ENCODE measurements at regions of chr12 and their contacts with region 1.

Region 1: DNA sequence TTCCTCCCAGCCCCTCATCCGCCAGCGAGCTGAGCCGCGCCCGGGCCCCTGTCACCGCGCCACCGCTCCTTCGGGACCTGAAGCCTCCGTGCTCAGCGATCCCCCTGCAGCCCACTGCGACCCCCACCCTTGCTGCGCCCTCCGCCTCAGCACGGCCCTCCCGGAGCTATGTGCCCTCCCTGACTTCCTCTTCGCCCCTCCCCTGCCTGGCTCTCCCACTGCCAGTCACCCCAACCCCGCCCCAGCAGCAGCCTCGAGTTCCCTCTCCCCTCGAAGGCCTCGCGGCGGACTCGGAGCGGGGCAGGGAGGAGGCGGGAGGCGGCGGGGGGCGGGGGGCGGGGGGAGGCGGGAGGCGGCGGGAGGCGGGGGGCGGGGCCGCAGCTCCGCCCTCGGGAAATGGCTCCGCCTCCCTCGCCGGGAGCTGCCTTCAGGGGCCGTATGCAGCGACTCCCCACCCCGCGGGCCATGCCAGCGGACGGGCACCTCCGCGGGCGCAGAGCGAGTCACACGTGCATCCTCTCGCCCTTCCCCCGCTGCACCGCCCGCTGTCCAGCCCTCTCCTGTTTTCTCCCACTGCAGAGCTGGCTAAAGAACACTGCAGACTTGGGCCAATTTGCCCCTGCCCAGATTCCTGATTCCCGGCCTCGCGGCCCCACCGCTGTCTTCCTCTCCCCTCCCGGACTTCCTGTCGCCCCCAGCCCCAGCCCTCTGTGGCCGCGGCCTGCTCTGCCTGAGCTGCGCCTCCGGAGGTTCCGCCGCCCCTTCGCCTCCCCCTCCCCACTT is 29.1 kb upstream of the ADIPOR2 start:
- DNase-seq: peak; percentile 76
- H3K4me3 ChIP-seq: peak overlapping the region; percentile 60
- H3K27ac ChIP-seq: no peak overlapping the region
- H3K27me3 ChIP-seq: peaks cover 4% of the 10 kb centered on the region
- CTCF ChIP-seq: no peak

Region 2: DNA sequence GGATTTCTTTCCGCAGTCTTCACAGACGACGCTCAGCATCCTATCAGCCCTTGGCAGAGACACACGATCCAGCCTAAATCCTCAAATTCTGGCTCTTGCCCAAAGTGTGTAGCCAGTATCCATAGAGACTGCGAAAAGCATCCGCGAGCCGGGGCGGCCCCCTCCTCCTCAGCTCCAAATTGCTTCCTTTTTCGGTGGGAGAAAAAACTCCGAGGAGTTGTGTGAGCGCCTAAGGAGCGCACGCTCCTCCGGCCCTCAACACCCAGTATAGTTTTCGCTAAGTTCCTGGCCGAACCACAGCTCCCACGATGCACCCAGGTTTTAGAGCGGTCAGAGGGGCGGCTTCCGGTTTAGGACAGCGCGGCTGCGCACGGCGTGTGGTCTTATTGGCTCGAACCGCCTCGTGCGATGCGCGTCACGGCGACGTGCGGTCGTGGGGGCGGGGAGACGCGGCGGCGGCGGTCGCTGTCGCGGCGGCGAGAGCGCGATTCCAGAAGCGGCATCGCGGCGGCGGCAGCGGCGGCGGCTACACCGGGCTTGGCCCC is 28.9 kb after region 1 on chr12 and contains the start of gene ADIPOR2:
- CTCF ChIA-PET with region 1: no interaction called
- POLR2A ChIA-PET with region 1: interaction called, 11 read pairs
- DNase-seq: peak; percentile 93
- H3K4me3 ChIP-seq: peak within 1 kb of the TSS; percentile 86
- H3K27ac ChIP-seq: peak within 1 kb of the TSS; percentile 87
- H3K27me3 ChIP-seq: peaks cover 3% of the 10 kb centered on the region
- CTCF ChIP-seq: no peak
- polyA plus RNA-seq, gene ADIPOR2: 37.9 and 39.5 TPM in 2 replicates